Activated B cell treated with CpG ODN at 0.5 μM for 24 hours (primary cell): ENCODE measurements at regions of chr19 and their contacts with region 1.

Region 1: DNA sequence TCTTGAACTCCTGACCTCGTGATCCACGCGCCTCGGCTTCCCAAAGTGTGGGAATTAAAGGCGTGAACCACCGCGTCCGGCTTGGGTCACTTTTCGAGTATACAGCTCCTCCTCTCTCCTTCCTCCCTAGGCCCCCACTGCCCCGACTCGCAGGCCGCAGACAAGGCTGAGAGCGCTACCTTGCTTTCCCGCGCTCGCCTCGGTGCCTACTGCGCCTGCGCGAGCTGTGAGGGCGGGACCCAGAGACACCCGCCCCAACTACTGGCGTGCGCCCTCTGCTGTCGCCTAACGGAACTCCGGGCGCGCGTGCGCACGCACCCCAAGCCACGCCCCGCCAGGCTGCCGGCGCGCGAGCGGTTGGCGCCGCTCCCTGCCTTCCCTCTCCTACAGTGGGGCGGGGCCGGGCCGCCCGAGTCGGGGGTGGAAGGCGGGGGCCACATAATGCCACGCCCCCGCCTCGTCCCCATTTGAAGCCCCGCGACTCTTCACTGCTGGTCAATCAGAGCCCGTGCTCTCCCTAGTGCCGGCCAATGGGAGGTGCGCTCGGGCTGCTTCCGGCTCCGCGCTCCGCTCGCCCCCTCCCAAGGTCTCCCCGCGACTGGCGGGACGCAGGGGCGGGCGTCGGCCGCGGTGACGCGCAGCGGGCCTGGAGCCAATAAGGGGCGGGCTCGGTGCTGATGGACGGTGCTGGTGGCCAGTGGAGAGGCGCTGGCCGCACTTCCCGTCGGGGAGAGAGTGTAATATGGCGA is at the start of gene RAB8A:
- DNase-seq: peak; percentile 100
- ATAC-seq: peak; percentile 90
- H3K4me3 Mint-ChIP-seq: peak within 1 kb of the TSS; percentile 99
- H3K27ac Mint-ChIP-seq: peak within 1 kb of the TSS; percentile 97
- H3K4me1 Mint-ChIP-seq: peaks cover 46% of the 10 kb centered on the region
- H3K27me3 Mint-ChIP-seq: no peaks in the 10 kb centered on the region
- CTCF ChIP-seq: peak; percentile 73
- total RNA-seq, gene RAB8A: 157 and 171 TPM in 2 replicates

Region 2: GRCh38 chr19:15125232-15126067 is 985.9 kb before region 1 on chr19:
- CTCF ChIA-PET with region 1: no interaction called
- POLR2A ChIA-PET with region 1: no interaction called
- intact Hi-C with region 1: loop called (anchors 1 kb)
- DNase-seq: peak; percentile 96
- ATAC-seq: peak; percentile 88
- H3K4me3 Mint-ChIP-seq: peak overlapping the region; percentile 95
- H3K27ac Mint-ChIP-seq: peak overlapping the region; percentile 91
- H3K4me1 Mint-ChIP-seq: peaks cover 17% of the 10 kb centered on the region
- H3K27me3 Mint-ChIP-seq: peaks cover 4% of the 10 kb centered on the region
- CTCF ChIP-seq: no peak

Region 3: DNA sequence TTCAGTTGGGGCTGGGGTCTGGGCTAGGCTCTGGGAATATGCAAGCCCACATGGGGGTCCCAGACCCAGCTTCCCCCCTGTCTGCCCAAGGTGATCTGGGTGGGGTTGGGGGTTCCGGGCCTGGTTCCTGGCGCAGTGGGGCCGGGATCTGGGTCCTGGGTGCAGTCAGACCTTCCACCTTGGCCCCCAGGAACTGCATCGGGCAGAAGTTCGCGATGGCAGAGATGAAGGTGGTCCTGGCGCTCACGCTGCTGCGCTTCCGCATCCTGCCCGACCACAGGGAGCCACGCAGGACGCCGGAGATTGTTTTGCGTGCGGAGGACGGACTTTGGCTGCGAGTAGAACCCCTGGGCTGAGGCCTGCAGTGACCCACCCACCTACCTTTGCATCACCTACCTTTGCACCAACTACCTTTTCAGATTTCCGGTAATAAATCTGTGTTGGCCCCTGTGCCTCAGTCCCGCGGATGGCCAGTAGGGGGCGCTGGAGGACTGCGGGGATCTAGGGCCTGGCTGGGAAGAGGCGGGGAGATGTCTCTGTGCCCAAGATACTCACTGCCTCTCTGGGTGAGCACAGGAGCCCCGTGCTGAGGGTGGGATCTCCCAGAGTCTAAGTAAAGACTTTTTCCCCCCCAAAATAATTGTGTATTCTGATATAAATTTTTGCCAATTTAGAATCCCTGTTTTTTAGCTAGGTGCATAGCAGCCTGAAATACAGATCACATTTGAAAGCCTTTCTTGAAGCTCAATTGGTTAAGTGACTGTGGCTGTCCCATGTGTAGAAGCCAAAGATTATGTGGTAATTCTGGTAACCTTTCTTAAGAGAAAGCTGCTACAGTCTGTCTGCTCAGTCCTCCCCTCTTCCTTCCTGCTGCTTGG is 482.1 kb before region 1 on chr19:
- CTCF ChIA-PET with region 1: no interaction called
- POLR2A ChIA-PET with region 1: interaction called, 3 read pairs
- intact Hi-C with region 1: loop called (anchors 1 kb)
- DNase-seq: peak; percentile 78
- ATAC-seq: peak; percentile 98
- H3K4me3 Mint-ChIP-seq: no peak overlapping the region
- H3K27ac Mint-ChIP-seq: no peak overlapping the region
- H3K4me1 Mint-ChIP-seq: peaks cover 11% of the 10 kb centered on the region
- H3K27me3 Mint-ChIP-seq: peaks cover 9% of the 10 kb centered on the region
- CTCF ChIP-seq: no peak

Region 4: GRCh38 chr19:16041299-16041990 is 69.9 kb before region 1 on chr19:
- CTCF ChIA-PET with region 1: interaction called, 5 read pairs
- POLR2A ChIA-PET with region 1: interaction called, 3 read pairs
- intact Hi-C with region 1: loop called (anchors 1 kb)
- DNase-seq: peak; percentile 75
- ATAC-seq: peak; percentile 90
- H3K4me3 Mint-ChIP-seq: peak overlapping the region; percentile 19
- H3K27ac Mint-ChIP-seq: no peak overlapping the region
- H3K4me1 Mint-ChIP-seq: peaks cover 6% of the 10 kb centered on the region
- H3K27me3 Mint-ChIP-seq: peaks cover 2% of the 10 kb centered on the region
- CTCF ChIP-seq: peak; percentile 40

Region 5: DNA sequence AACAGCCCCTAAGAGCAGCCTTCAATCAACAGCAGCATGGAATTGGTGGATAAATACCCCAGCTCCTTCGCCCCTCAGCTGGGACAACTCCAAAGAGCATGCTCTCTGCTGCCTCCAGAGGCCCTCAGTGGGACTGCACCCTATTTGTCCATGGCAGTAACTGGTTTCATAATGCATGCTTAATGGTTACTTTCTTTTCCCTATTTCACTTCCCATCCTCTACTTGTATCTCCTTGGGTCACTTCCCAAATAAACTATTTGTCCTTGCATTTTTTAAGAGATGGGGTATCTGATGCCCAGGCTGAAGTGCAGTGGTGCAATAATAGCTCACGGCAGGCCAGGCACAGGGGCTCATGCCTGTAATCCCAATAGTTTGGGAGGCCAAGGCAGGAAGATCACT is 48.5 kb before region 1 on chr19:
- CTCF ChIA-PET with region 1: interaction called, 5 read pairs
- POLR2A ChIA-PET with region 1: interaction called, 5 read pairs
- intact Hi-C with region 1: loop called (anchors 1 kb)
- DNase-seq: peak; percentile 63
- ATAC-seq: peak; percentile 92
- H3K4me3 Mint-ChIP-seq: no peak overlapping the region
- H3K27ac Mint-ChIP-seq: no peak overlapping the region
- H3K4me1 Mint-ChIP-seq: peaks cover 10% of the 10 kb centered on the region
- H3K27me3 Mint-ChIP-seq: peaks cover 3% of the 10 kb centered on the region
- CTCF ChIP-seq: peak; percentile 80

Region 6: GRCh38 chr19:16070366-16070990 is 40.9 kb before region 1 on chr19:
- CTCF ChIA-PET with region 1: interaction called, 3 read pairs
- POLR2A ChIA-PET with region 1: interaction called, 88 read pairs
- intact Hi-C with region 1: loop called (anchors 1 kb)
- DNase-seq: peak; percentile 64
- ATAC-seq: peak; percentile 93
- H3K4me3 Mint-ChIP-seq: peak overlapping the region; percentile 67
- H3K27ac Mint-ChIP-seq: no peak overlapping the region
- H3K4me1 Mint-ChIP-seq: peaks cover 16% of the 10 kb centered on the region
- H3K27me3 Mint-ChIP-seq: no peaks in the 10 kb centered on the region
- CTCF ChIP-seq: no peak

Region 7: DNA sequence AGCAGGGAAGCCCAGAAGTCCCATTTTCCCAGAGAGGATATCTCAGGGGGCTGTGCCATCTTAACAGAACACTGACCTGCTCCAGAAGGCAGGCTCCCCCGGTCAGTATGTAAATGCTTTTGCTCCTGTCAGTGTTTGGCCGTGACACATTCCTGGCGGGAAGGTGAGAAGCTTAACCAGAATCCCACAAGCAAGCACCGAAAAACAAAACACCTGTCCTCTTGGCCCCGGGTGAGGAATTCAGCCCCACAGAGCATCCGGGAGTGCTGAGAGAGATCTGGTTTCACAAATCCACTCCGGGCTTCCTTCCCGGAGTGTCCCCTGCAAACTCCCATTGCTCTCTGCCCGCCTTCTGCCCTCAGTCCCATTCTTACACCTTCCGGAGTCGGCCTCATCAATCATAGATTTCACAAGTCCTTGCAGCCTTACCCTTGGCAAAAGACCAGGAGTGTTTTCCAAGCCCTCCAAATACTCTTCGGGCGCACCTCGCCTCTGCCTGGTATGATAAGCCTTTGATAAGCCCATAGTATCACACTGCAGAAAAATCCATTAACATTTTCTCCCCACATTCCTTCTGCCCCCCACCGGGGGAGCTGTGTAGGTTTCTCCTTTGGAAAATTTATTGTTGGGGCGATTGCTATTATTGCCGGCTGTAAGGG is 22.9 kb before region 1 on chr19:
- CTCF ChIA-PET with region 1: interaction called, 4 read pairs
- POLR2A ChIA-PET with region 1: interaction called, 16 read pairs
- intact Hi-C with region 1: no loop called
- DNase-seq: no peak
- ATAC-seq: no peak
- H3K4me3 Mint-ChIP-seq: no peak overlapping the region
- H3K27ac Mint-ChIP-seq: no peak overlapping the region
- H3K4me1 Mint-ChIP-seq: peaks cover 22% of the 10 kb centered on the region
- H3K27me3 Mint-ChIP-seq: no peaks in the 10 kb centered on the region
- CTCF ChIP-seq: no peak